Sigmoid colon (tissue), 7 donors: ENCODE measurements at regions of chr2 and their contacts with region 1.

Region 1: GRCh38 chr2:23434721-23435121 is 49.7 kb downstream of the KLHL29 start:
- DNase-seq: peak; percentile 91
- H3K4me3 ChIP-seq: no peak overlapping the region
- H3K27ac ChIP-seq: peak overlapping the region in 3 of 4 donors; percentile 76 to 91 (median 89)
- H3K4me1 ChIP-seq: peaks cover 0 to 55% (median 48%) of the 10 kb centered on the region in 4 donors
- H3K27me3 ChIP-seq: no peaks in the 10 kb centered on the region
- CTCF ChIP-seq: no peak
- EP300 ChIP-seq: peak; percentile 36 to 90 (median 62)
- POLR2A ChIP-seq: no peak

Region 2: DNA sequence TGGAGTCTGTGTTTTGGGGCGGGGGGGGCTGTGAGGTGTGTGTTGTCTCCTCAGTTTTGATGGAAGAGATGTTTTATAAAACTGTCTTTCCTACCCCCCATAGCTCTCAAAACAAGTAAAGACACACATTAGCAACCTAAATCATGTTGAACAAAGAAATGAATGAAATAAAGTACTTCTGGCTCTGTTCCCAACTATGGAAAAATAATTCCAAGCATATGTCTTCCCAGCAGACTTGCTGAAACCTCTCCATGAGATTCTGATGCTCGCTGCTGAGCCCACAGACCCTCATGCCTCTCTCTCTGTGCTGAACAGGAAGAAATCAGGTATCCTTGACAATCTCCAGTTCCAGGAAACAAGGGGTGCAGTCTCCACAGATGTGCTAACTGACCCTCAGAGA is 276.4 kb before region 1 on chr2:
- intact Hi-C with region 1: no loop called
- DNase-seq: no peak
- H3K4me3 ChIP-seq: no peak overlapping the region
- H3K27ac ChIP-seq: no peak overlapping the region
- H3K4me1 ChIP-seq: peaks cover 0 to 20% (median 15%) of the 10 kb centered on the region in 4 donors
- H3K27me3 ChIP-seq: no peaks in the 10 kb centered on the region
- CTCF ChIP-seq: no peak
- EP300 ChIP-seq: no peak
- POLR2A ChIP-seq: no peak

Region 3: DNA sequence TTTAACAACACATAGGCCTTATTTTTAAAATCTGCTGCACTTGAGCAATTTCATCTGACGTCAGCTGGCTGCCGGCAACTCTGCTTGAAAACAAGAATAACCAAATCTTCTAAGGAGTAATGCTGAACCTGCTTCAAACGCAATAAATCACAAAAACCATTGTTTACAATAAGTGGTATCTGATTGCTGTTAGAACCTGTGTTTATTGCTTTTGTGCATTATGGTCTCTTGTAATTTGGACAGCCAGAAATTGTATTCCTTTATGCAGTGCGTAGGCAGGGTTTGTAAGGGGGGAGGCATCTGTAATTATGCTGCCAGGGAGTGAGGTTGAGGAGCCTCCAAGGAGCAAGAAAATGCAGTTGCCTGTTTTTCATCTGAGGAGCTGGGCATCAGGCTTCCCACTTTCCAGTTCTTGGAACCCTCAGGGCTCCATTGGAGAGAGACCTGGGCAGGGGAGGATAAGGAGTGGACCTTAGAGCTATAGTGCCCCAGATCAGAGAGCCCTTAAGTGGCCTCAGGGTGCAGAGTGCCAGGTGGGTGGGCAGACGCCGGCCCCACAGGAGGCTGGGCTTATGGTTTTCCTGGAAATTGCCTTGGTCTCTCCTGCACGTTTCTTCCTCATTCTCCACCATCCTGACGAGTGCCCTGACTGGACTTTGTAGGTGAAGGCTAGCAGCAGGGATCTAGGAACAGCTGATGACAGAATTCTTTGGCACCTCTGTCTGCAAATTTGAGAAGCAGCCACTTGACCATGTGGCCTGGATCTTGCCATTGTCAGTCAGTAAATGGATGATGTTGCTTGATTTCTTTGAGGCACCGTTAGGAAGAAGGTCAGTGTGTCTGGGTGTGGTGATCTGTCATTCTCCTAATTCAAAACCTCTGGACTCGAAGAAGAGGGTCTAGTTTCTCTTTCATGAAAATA is 79.4 kb after region 1 on chr2:
- intact Hi-C with region 1: loop called (anchors 2 kb)
- DNase-seq: peak; percentile 86
- H3K4me3 ChIP-seq: peak overlapping the region; percentile 15 to 35 (median 28)
- H3K27ac ChIP-seq: peak overlapping the region; percentile 69 to 85 (median 80)
- H3K4me1 ChIP-seq: peaks cover 0 to 51% (median 30%) of the 10 kb centered on the region in 4 donors
- H3K27me3 ChIP-seq: no peaks in the 10 kb centered on the region
- CTCF ChIP-seq: no peak
- EP300 ChIP-seq: peak; percentile 74 to 94 (median 77)
- POLR2A ChIP-seq: no peak

Region 4: GRCh38 chr2:23720705-23721453 is 286.2 kb after region 1 on chr2:
- intact Hi-C with region 1: no loop called
- DNase-seq: no peak
- H3K4me3 ChIP-seq: no peak overlapping the region
- H3K27ac ChIP-seq: no peak overlapping the region
- H3K4me1 ChIP-seq: peaks cover 0 to 7% (median 0%) of the 10 kb centered on the region in 4 donors
- H3K27me3 ChIP-seq: no peaks in the 10 kb centered on the region
- CTCF ChIP-seq: no peak
- EP300 ChIP-seq: no peak
- POLR2A ChIP-seq: no peak